Esophagus squamous epithelium (tissue), 5 donors: ENCODE measurements at regions of chr2 and their contacts with region 1.

Region 1: GRCh38 chr2:39227628-39228412 is 15.9 kb downstream of the CDKL4 start:
- DNase-seq: no peak
- H3K4me3 ChIP-seq: peak overlapping the region in 3 of 4 donors; percentile 8 to 41 (median 15)
- H3K27ac ChIP-seq: peak overlapping the region in 1 of 4 donors; percentile 11
- H3K4me1 ChIP-seq: peaks cover 0 to 20% (median 0%) of the 10 kb centered on the region in 3 donors
- H3K27me3 ChIP-seq: no peaks in the 10 kb centered on the region
- CTCF ChIP-seq: peak; percentile 81 to 89 (median 86)
- POLR2A ChIP-seq: no peak

Region 2: GRCh38 chr2:39062320-39062719 is 165.5 kb before region 1 on chr2:
- intact Hi-C with region 1: loop called (anchors 5 kb)
- DNase-seq: no peak
- H3K4me3 ChIP-seq: no peak overlapping the region
- H3K27ac ChIP-seq: no peak overlapping the region
- H3K4me1 ChIP-seq: no peaks in the 10 kb centered on the region
- H3K27me3 ChIP-seq: no peaks in the 10 kb centered on the region
- CTCF ChIP-seq: no peak
- POLR2A ChIP-seq: no peak

Region 3: GRCh38 chr2:39124000-39124745 is 103.6 kb before region 1 on chr2:
- intact Hi-C with region 1: loop called (anchors 5 kb)
- DNase-seq: peak; percentile 67
- H3K4me3 ChIP-seq: peak overlapping the region; percentile 58 to 83 (median 70)
- H3K27ac ChIP-seq: peak overlapping the region; percentile 92 to 98 (median 96)
- H3K4me1 ChIP-seq: peaks cover 11 to 56% (median 21%) of the 10 kb centered on the region in 3 donors
- H3K27me3 ChIP-seq: no peaks in the 10 kb centered on the region
- CTCF ChIP-seq: peak; percentile 19 to 61 (median 33)
- POLR2A ChIP-seq: peak in 3 of 4 donors; percentile 65 to 91 (median 72)

Region 4: GRCh38 chr2:39416140-39416539 is 188.3 kb after region 1 on chr2:
- intact Hi-C with region 1: no loop called
- DNase-seq: no peak
- H3K4me3 ChIP-seq: no peak overlapping the region
- H3K27ac ChIP-seq: no peak overlapping the region
- H3K4me1 ChIP-seq: peaks cover 0 to 58% (median 5%) of the 10 kb centered on the region in 3 donors
- H3K27me3 ChIP-seq: no peaks in the 10 kb centered on the region
- CTCF ChIP-seq: no peak
- POLR2A ChIP-seq: no peak

Region 5: DNA sequence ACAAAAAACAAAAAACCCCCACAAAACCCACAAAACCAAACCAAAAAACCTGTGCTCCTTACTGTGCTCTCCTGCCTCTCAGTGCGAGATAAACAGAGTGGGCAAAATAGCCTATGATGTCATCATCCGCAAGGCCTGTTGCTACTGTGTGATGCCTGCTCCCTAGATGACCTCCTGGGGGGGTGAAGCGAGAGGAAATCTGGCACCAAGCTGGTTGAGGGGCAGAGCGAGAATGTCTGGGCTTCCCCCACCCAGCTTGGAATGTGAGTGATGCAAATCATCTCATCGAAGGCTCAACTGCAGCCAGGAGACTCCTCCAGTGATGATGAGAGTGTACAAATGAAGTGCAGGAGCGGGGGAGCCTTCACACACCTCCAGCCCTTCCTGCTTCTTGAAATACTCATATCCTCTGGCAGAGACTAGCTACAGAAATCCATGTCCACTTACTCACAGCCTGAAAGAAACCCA is 267.0 kb after region 1 on chr2:
- intact Hi-C with region 1: no loop called
- DNase-seq: no peak
- H3K4me3 ChIP-seq: no peak overlapping the region
- H3K27ac ChIP-seq: no peak overlapping the region
- H3K4me1 ChIP-seq: peaks cover 0 to 22% (median 10%) of the 10 kb centered on the region in 3 donors
- H3K27me3 ChIP-seq: no peaks in the 10 kb centered on the region
- CTCF ChIP-seq: no peak
- POLR2A ChIP-seq: no peak